Activated CD4-positive, alpha-beta T cell treated with anti-CD3 and anti-CD28 coated beads for 36 hours (primary cell): ENCODE measurements at regions of chr7 and their contacts with region 1.

Region 1: DNA sequence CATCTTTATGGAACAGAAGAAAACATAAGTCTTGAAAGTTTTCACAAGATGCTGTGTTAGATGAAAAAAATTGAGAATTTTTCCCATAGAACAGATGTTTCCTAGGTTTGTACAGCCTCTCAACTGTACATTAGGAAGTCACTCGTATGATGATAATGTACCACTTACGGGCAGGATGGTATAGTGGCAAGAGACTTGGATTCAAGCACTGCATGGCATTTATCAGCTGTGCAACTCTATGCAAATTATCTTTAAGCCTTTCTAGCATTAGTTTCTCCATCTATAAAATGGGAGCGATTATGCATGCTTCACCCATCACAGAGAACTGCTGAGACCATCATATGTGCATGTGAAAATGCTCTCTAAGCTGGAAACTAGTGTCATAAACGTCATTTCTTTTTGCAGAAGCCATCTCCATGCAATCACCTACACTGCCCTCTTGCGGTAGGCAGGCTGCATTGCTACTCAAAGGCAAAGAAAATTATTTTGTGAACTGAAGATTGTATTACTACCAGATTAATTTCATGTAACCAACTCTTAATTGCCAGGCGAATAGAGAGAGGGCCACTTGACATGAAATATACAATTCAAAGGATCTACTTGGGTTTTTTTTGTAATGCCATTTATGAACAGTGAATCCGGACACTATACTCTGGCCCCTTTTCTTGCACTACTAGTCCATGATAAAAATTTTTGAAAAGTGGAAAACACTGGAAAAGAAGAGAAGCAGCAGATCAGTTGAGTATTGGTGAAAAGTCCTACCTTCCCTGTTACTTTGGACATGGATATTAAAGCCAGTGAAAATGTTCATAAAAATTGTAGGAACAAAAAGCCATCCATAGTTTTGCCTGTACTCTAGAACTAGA is 102.3 kb downstream of the JAZF1 start:
- DNase-seq: peak; percentile 66
- ATAC-seq: peak; percentile 70
- H3K4me3 Mint-ChIP-seq: no peak overlapping the region
- H3K27ac Mint-ChIP-seq: no peak overlapping the region
- H3K4me1 Mint-ChIP-seq: peaks cover 5% of the 10 kb centered on the region
- H3K27me3 Mint-ChIP-seq: no peaks in the 10 kb centered on the region

Region 2: DNA sequence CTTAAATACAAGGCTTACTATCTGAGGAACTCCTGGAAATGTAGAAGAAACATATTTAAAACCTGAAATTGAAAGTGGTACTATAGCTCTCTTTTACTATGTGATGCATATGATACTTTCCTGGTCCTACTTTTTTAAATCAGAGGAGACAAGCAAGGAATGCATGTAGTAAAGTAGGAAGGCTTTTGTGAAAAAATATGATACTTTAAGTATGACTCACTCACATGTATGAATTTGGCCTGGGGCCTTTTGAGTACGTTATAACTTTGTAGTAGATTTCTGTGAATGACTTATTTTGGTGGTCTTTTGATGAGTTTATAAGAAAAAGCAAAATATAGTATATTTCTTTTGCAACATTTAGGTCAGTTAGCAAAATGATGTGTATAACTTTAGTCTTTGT is 284.5 kb before region 1 on chr7:
- CTCF ChIA-PET with region 1: no interaction called
- POLR2A ChIA-PET with region 1: no interaction called
- intact Hi-C with region 1: no loop called
- DNase-seq: no peak
- ATAC-seq: no peak
- H3K4me3 Mint-ChIP-seq: no peak overlapping the region
- H3K27ac Mint-ChIP-seq: no peak overlapping the region
- H3K4me1 Mint-ChIP-seq: no peaks in the 10 kb centered on the region
- H3K27me3 Mint-ChIP-seq: no peaks in the 10 kb centered on the region

Region 3: GRCh38 chr7:28062197-28062991 is 15.9 kb before region 1 on chr7:
- CTCF ChIA-PET with region 1: interaction called, 19 read pairs
- POLR2A ChIA-PET with region 1: no interaction called
- intact Hi-C with region 1: no loop called
- DNase-seq: peak; percentile 79
- ATAC-seq: peak; percentile 79
- H3K4me3 Mint-ChIP-seq: no peak overlapping the region
- H3K27ac Mint-ChIP-seq: no peak overlapping the region
- H3K4me1 Mint-ChIP-seq: peaks cover 5% of the 10 kb centered on the region
- H3K27me3 Mint-ChIP-seq: no peaks in the 10 kb centered on the region